Left cardiac atrium (tissue), 4 donors: ENCODE measurements at regions of chr22 and their contacts with region 1.

Region 1: DNA sequence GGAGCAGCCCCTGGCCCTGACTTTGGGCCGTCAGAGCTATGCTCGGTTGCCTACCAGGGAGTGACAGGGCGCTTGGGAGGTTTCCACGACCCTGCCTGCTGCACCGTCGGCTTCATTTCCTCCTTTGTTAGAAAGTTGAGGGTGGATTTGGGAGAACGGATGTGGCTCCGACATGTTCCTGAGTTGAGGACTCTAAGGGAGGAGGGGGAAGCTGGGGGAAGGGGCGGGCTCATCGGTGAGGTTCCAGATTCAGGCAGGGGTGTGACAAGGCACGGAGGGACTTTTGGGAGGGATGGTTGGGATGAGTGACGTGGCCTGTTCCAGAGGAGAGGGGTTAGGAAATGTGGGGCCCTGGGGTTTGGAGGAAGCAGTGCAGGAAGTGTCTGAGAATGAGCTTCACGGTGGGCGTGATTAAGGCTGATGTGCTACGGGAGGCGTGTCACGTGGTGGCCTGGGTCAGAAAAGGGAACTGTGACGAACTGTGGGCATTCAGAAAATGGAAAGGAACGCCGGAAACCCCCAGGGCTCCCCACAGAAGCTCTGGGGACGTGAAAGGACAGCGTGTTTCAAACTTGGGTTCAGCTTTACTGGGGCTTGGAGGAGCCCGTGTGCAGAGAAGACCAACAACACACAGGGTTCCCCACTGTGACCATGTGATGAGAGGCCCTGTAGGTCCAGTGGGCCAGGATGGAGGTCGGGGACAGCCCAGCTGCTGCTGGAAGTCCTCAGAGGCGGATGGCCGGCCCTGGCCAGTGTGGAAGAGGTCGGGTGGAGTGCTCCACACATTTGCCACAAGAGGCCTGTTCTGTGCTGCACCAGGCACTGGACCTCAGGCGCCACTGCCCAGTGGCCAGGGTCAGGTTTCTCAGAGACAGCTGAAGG is 2.8 kb downstream of the PARVB start:
- DNase-seq: peak; percentile 89
- ATAC-seq: peak; percentile 43 to 68

Region 2: DNA sequence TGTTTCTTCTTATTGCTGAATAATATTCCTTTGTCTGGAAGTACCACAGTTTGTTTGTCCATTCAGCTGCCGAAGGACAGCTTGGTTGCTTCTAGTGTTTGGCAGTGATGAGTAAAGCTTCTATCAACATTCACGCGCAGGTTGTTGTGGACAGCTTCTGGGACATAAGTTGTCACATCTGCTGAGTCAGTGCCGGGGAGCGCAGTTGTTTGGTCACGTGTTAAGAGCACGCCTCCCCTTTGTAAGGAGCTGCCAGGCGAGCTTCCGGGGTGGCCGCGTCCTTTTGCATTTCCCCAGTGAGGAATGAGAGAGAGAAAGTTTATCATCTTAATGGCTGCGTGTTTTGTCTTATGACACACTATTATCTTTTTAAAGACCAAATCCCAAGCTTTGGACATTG is 41.3 kb before region 1 on chr22:
- intact Hi-C with region 1: no loop called
- DNase-seq: no peak
- ATAC-seq: peak in 1 of 2 donors; percentile 27

Region 3: GRCh38 chr22:44074337-44074984 is 47.6 kb after region 1 on chr22:
- intact Hi-C with region 1: loop called in 1 of 2 experiments (anchors 10 kb)
- DNase-seq: no peak
- ATAC-seq: no peak